ENCODE measurements at regions of chr15 and their contacts with region 1.

Region 1: GRCh38 chr15:100341662-100342560 is at the start of gene ADAMTS17:
- DNase-seq: peak; percentile 89
- H3K4me3 Mint-ChIP-seq: peak within 1 kb of the TSS; percentile 7
- H3K27ac Mint-ChIP-seq: no peak within 1 kb of the TSS
- H3K4me1 Mint-ChIP-seq: peaks cover 1% of the 10 kb centered on the region
- H3K27me3 Mint-ChIP-seq: peaks cover 58% of the 10 kb centered on the region
- total RNA-seq, gene ADAMTS17: 0.28 and 1.1 TPM in 2 replicates

Region 2: GRCh38 chr15:99928429-99928981 is 413.4 kb before region 1 on chr15:
- intact Hi-C with region 1: loop called (anchors 2 kb)
- DNase-seq: peak; percentile 81
- H3K4me3 Mint-ChIP-seq: peak overlapping the region; percentile 84
- H3K27ac Mint-ChIP-seq: peak overlapping the region; percentile 70
- H3K4me1 Mint-ChIP-seq: peaks cover 14% of the 10 kb centered on the region
- H3K27me3 Mint-ChIP-seq: peaks cover 24% of the 10 kb centered on the region

Region 3: GRCh38 chr15:100405179-100405578 is 63.3 kb after region 1 on chr15:
- intact Hi-C with region 1: no loop called
- DNase-seq: no peak
- H3K4me3 Mint-ChIP-seq: no peak overlapping the region
- H3K27ac Mint-ChIP-seq: no peak overlapping the region
- H3K4me1 Mint-ChIP-seq: no peaks in the 10 kb centered on the region
- H3K27me3 Mint-ChIP-seq: no peaks in the 10 kb centered on the region

Region 4: DNA sequence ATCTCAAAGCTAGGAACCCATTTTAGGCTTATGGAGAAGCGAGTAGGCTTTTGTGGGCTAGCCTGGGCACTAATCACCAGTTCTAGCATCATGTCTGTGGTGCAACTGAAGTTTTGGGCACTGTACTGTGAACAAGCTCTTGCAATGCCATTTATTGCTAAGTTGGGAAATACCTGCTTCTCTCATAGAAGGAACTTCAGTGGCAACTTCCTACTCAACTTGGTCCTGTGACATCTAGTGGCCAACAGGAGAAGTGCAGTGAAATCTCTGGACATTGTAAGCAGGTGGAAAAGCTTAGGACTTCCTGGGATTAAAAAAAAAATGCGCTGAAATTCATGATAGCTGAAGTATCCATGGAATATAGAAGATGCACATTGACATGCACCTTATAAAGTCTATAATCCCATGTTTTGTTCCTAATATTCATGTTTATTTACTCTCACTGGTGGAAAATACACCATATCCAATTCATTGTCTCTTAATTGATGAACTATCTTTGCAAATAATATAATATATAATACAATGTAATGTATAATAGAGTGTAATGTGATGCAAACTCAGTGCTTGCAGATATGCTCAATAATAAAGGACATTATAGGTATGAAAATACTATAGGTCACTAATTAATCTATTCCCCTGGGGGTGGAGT is 531.2 kb after region 1 on chr15:
- intact Hi-C with region 1: loop called (anchors 5 kb)
- DNase-seq: peak; percentile 19
- H3K4me3 Mint-ChIP-seq: no peak overlapping the region
- H3K27ac Mint-ChIP-seq: no peak overlapping the region
- H3K4me1 Mint-ChIP-seq: no peaks in the 10 kb centered on the region
- H3K27me3 Mint-ChIP-seq: peaks cover 36% of the 10 kb centered on the region

Measured in activated T-helper 2 cell treated with anti-CD3 and anti-CD28 coated beads, Interferon-gamma antibody, Interleukin-2, Interleukin-4, amounts not matched to agents 10 μg/mL and 5 μg/mL and 100 μg/mL, durations not matched to agents 14 hours and 24 hours and 36 hours (primary cell).